A549 (cell line): ENCODE measurements at regions of chr5 and their contacts with region 1.

Region 1: GRCh38 chr5:168268949-168269943 is 22.2 kb upstream of the WWC1 start:
- DNase-seq: peak; percentile 90 to 91
- ATAC-seq: peak; percentile 85 to 94
- H3K4me3 ChIP-seq: peak overlapping the region; percentile 42
- H3K27ac ChIP-seq: peak overlapping the region; percentile 78 to 87
- H3K4me1 ChIP-seq: peaks cover 26% of the 10 kb centered on the region
- CTCF ChIP-seq: peak; percentile 92
- EP300 ChIP-seq: no peak
- POLR2A ChIP-seq: peak; percentile 23; the same call in 1 of the 2 replicates
- RAD21 ChIP-seq: peak; percentile 99

Region 2: GRCh38 chr5:168291464-168291961 is 22.3 kb after region 1 on chr5 and contains the start of gene WWC1:
- CTCF ChIA-PET with region 1: interaction called, 28 read pairs
- POLR2A ChIA-PET with region 1: interaction called, 3 read pairs
- DNase-seq: peak; percentile 84 to 86
- ATAC-seq: peak; percentile 72 to 84
- H3K4me3 ChIP-seq: peak within 1 kb of the TSS; percentile 94
- H3K27ac ChIP-seq: peak within 1 kb of the TSS; percentile 97
- H3K4me1 ChIP-seq: peaks cover 67% of the 10 kb centered on the region
- CTCF ChIP-seq: peak; percentile 32; the same call in 2 of the 3 replicates
- EP300 ChIP-seq: no peak
- POLR2A ChIP-seq: peak; percentile 59
- RAD21 ChIP-seq: peak; percentile 16 to 39; a peak in 3 of 5 replicates
- polyA plus RNA-seq, gene WWC1: 75.0 and 98.1 TPM in 2 replicates

Region 3: DNA sequence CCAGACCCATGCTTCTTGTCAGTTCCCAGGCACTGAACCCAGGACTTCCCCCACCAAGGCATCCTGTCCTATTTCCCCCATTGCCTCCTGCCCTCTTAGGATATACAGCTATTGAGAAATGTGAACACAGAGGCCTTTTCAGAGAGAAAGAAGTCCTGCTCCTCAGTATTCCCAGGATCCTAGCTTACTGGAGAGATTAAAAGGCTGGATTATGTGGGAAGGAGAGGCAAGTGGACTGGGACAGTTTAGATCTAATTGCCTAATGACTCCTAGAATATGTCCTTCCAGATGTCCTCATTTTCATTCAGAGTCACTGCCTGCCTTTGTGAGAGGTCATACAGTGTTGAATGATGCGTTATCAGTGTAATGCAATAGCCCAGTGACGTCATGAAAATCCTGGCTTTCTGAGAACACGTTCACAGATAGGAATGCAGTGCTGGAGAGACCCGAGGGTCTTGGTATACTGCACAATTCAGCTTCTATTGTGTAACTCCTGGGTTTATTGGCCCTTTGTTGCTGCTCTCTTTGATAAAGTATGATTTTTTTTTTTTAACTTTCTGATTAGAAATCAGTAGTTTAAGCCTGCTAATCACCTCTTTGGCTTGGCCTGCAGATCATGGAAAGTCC is 48.4 kb after region 1 on chr5:
- CTCF ChIA-PET with region 1: interaction called, 19 read pairs
- POLR2A ChIA-PET with region 1: no interaction called
- DNase-seq: peak; percentile 95 to 98
- ATAC-seq: peak; percentile 64 to 65
- H3K4me3 ChIP-seq: 0 out of 3 replicates have a peak overlapping the region, but pooled peaks have one; percentile 3
- H3K27ac ChIP-seq: peak overlapping the region; percentile 92 to 98
- H3K4me1 ChIP-seq: peaks cover 88% of the 10 kb centered on the region
- CTCF ChIP-seq: no peak
- EP300 ChIP-seq: peak; percentile 98
- POLR2A ChIP-seq: no peak
- RAD21 ChIP-seq: peak; percentile 28 to 53; a peak in 4 of 5 replicates

Region 4: GRCh38 chr5:168359832-168360460 is 90.7 kb after region 1 on chr5:
- CTCF ChIA-PET with region 1: interaction called, 16 read pairs
- POLR2A ChIA-PET with region 1: no interaction called
- DNase-seq: no peak
- ATAC-seq: no peak
- H3K4me3 ChIP-seq: no peak overlapping the region
- H3K27ac ChIP-seq: no peak overlapping the region; a peak in 1 of 6 replicates
- H3K4me1 ChIP-seq: peaks cover 77% of the 10 kb centered on the region
- CTCF ChIP-seq: no peak
- EP300 ChIP-seq: no peak
- POLR2A ChIP-seq: no peak
- RAD21 ChIP-seq: no peak

Region 5: DNA sequence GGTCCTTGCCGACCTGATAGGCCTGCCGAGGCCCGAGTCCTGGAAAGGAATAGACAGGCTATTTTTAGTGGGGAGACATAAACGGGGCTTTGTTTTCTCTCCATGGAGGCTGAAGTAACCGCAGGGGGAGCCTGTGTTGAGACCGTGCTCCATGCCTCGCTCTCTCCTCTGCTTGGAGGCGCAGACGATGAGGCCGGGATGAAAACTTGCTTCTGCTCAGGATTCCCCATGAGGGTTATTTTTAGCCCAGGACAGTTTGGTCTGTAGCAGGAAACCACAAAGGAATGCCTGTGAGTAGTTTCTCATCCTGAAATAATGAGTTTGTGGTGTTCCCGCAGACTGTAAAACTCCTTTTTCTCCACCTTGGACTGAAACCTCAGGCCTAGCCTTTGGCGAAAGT is 135.1 kb after region 1 on chr5:
- CTCF ChIA-PET with region 1: interaction called, 28 read pairs
- POLR2A ChIA-PET with region 1: no interaction called
- DNase-seq: no peak
- ATAC-seq: no peak
- H3K4me3 ChIP-seq: no peak overlapping the region
- H3K27ac ChIP-seq: no peak overlapping the region
- H3K4me1 ChIP-seq: peaks cover 9% of the 10 kb centered on the region
- CTCF ChIP-seq: no peak
- EP300 ChIP-seq: no peak
- POLR2A ChIP-seq: no peak
- RAD21 ChIP-seq: no peak

Region 6: GRCh38 chr5:168422431-168422830 is 153.2 kb after region 1 on chr5:
- CTCF ChIA-PET with region 1: interaction called, 34 read pairs
- POLR2A ChIA-PET with region 1: no interaction called
- DNase-seq: peak in 1 of 2 experiments; percentile 41
- ATAC-seq: peak; percentile 60 to 76; a peak in 4 of 6 replicates
- H3K4me3 ChIP-seq: no peak overlapping the region
- H3K27ac ChIP-seq: peak overlapping the region in 1 of 2 experiments; percentile 50; a peak in 2 of 6 replicates
- H3K4me1 ChIP-seq: peaks cover 34% of the 10 kb centered on the region
- CTCF ChIP-seq: peak; percentile 38
- EP300 ChIP-seq: no peak
- POLR2A ChIP-seq: no peak
- RAD21 ChIP-seq: peak; percentile 53 to 62; a peak in 4 of 5 replicates

Region 7: DNA sequence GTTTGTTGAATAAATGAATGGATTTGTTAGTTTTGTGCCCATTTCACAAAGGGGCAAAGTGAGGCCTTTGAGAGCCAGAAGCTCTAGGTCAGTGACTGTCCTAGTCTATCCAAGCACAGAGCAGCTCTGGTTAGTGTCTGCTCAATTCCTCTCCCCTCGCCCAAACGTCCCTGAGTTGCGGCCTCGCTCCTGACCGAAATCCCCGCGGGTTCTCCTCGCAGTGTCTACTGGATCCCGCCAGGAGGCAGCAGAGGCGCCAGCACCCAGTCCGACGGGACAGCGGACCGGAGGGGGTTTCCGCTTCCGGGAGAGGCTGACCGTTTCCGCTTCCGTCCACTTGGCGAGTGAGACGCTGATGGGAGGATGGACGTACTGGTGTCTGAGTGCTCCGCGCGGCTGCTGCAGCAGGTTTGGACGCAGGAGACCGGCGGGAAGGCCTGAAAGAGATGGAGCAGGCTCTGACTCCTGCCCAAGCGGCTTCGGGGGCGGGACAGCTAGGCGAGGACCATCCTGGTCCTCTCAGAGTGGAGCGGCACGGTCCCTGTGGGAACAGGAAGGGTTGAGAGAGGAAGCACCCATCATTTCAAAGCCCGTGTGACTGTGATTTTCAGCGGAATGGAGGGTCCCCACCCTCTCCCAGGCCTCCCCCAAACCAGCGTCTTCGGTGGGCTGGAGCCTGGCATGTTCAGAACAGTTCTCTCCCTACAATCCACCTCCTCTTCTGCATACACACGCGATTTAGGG is 217.1 kb after region 1 on chr5 and contains the start of gene RARS1:
- CTCF ChIA-PET with region 1: interaction called, 18 read pairs
- POLR2A ChIA-PET with region 1: interaction called, 3 read pairs
- DNase-seq: peak; percentile 94
- ATAC-seq: peak; percentile 96 to 98
- H3K4me3 ChIP-seq: peak within 1 kb of the TSS; percentile 98
- H3K27ac ChIP-seq: peak within 1 kb of the TSS; percentile 89 to 94
- H3K4me1 ChIP-seq: peaks cover 10% of the 10 kb centered on the region
- CTCF ChIP-seq: peak; percentile 74
- EP300 ChIP-seq: no peak
- POLR2A ChIP-seq: peak; percentile 98
- RAD21 ChIP-seq: peak; percentile 52 to 58
- polyA plus RNA-seq, gene RARS1: 112 and 142 TPM in 2 replicates